IMR-90 (cell line): ENCODE measurements at regions of chr3 and their contacts with region 1.

Region 1: GRCh38 chr3:112693186-112693585 is 52.2 kb upstream of the CCDC80 start:
- DNase-seq: no peak
- ATAC-seq: no peak
- H3K4me3 ChIP-seq: no peak overlapping the region
- H3K27ac ChIP-seq: no peak overlapping the region
- H3K4me1 ChIP-seq: peaks cover 22% of the 10 kb centered on the region
- H3K27me3 ChIP-seq: no peaks in the 10 kb centered on the region
- CTCF ChIP-seq: no peak
- POLR2A ChIP-seq: no peak
- RAD21 ChIP-seq: no peak

Region 2: DNA sequence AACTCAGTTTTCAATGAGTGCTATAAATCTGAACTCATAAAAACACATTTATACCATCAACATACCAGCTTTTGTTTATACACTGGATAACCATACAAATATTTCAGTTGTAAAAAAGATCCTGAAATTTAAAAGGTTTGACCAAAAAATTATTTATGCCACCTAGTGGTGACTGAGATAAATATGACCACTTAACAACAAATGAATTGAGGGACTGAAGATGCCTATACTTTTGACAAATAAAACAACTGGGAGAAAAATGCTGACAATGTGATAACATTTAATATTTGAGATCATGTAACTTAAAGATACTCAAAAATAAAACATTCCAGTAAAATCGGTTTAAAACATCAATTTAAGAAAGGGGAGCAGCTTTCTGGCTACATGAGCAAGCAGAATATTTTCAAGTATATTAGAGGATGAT is 161.8 kb before region 1 on chr3:
- CTCF ChIA-PET with region 1: no interaction called
- POLR2A ChIA-PET with region 1: no interaction called
- dilution Hi-C with region 1: no loop called
- in situ Hi-C with region 1: no loop called
- intact Hi-C with region 1: no loop called
- DNase-seq: peak; percentile 49
- ATAC-seq: no peak
- H3K4me3 ChIP-seq: no peak overlapping the region
- H3K27ac ChIP-seq: no peak overlapping the region
- H3K4me1 ChIP-seq: no peaks in the 10 kb centered on the region
- H3K27me3 ChIP-seq: no peaks in the 10 kb centered on the region
- CTCF ChIP-seq: peak; percentile 52
- POLR2A ChIP-seq: no peak
- RAD21 ChIP-seq: 0 out of 2 replicates have a peak, but pooled peaks have one; percentile 27

Region 3: GRCh38 chr3:112718516-112718915 is 25.3 kb after region 1 on chr3:
- CTCF ChIA-PET with region 1: interaction called, 4 read pairs
- POLR2A ChIA-PET with region 1: no interaction called
- dilution Hi-C with region 1: no loop called
- in situ Hi-C with region 1: no loop called
- intact Hi-C with region 1: loop called (anchors 1 kb)
- DNase-seq: no peak
- ATAC-seq: no peak
- H3K4me3 ChIP-seq: no peak overlapping the region
- H3K27ac ChIP-seq: no peak overlapping the region
- H3K4me1 ChIP-seq: no peaks in the 10 kb centered on the region
- H3K27me3 ChIP-seq: no peaks in the 10 kb centered on the region
- CTCF ChIP-seq: no peak
- POLR2A ChIP-seq: no peak
- RAD21 ChIP-seq: no peak